ENCODE measurements at regions of chr14 and their contacts with region 1.

Region 1: GRCh38 chr14:26401179-26401968 is 196.5 kb downstream of the NOVA1 start:
- DNase-seq: no peak
- ATAC-seq: no peak
- H3K4me3 ChIP-seq: no peak overlapping the region
- H3K27ac ChIP-seq: no peak overlapping the region
- H3K4me1 ChIP-seq: no peaks in the 10 kb centered on the region
- H3K27me3 ChIP-seq: peaks cover 0 to 11% (median 0%) of the 10 kb centered on the region in 9 donors
- CTCF ChIP-seq: no peak
- POLR2A ChIP-seq: no peak

Region 2: GRCh38 chr14:26363689-26364088 is 37.7 kb before region 1 on chr14:
- intact Hi-C with region 1: loop called in 1 of 10 experiments (anchors 2 kb)
- DNase-seq: no peak
- ATAC-seq: no peak
- H3K4me3 ChIP-seq: no peak overlapping the region
- H3K27ac ChIP-seq: no peak overlapping the region
- H3K4me1 ChIP-seq: no peaks in the 10 kb centered on the region
- H3K27me3 ChIP-seq: no peaks in the 10 kb centered on the region
- CTCF ChIP-seq: no peak
- POLR2A ChIP-seq: no peak

Region 3: DNA sequence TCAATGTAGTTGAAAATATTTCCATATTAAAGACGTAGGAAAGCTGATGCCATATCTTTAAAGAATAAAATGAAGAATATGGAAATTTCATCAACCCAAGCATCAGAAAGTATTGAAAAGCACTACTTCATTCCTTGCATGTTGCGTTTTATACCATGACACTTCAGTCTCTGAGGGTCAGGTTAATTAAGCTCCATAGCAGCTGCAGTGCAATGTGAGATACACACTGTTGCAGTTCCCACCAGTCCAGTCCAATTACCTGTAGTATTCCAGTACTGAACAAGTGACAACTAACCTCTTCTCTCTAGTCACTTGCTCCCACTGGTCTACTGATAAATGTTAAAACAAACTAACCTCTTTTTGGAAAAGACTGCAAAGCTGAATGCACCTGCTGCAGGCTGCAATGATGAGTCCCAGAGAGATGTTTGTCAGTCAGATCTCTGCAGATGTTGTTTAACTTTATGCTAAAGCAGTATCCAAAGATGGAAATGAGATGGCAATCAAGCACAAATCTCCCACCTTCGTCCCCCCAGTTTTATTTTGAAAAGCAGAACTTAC is 188.5 kb after region 1 on chr14:
- intact Hi-C with region 1: no loop called
- DNase-seq: no peak
- ATAC-seq: no peak
- H3K4me3 ChIP-seq: no peak overlapping the region
- H3K27ac ChIP-seq: no peak overlapping the region
- H3K4me1 ChIP-seq: no peaks in the 10 kb centered on the region
- H3K27me3 ChIP-seq: no peaks in the 10 kb centered on the region
- CTCF ChIP-seq: no peak
- POLR2A ChIP-seq: no peak